Dendritic cell treated with granulocyte-macrophage colony-stimulating factor and Interleukin-4, amounts not matched to agents 40 ng/mL and 50 ng/mL, for 4 days (primary cell): ENCODE measurements at regions of chr2 and their contacts with region 1.

Region 1: DNA sequence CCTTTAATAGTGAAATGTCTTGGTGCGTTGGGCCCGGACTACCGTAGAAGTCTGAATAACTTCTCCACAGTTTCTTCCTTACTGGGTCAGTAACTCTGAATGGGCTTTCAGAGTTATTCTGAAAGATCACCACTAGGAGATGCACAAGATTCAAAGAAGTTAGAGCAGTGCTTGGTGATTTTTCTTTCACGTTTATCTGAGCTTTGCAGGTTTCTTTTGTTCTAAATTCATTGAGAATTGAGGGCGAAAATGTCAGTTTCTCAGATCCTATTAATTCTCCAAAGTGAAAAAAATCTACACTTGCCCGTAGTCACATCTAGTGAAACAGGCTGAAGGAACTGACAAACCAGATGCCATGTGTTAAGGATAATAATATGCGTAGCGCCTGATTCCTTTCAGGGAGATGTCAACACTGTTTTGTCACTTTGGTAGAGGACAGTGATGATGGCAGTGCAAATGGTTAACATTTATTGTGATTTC is 70.1 kb downstream of the QPCT start:
- H3K4me3 Mint-ChIP-seq: no peak overlapping the region
- H3K27ac Mint-ChIP-seq: no peak overlapping the region
- H3K4me1 Mint-ChIP-seq: no peaks in the 10 kb centered on the region
- H3K27me3 Mint-ChIP-seq: peaks cover 7% of the 10 kb centered on the region

Region 2: DNA sequence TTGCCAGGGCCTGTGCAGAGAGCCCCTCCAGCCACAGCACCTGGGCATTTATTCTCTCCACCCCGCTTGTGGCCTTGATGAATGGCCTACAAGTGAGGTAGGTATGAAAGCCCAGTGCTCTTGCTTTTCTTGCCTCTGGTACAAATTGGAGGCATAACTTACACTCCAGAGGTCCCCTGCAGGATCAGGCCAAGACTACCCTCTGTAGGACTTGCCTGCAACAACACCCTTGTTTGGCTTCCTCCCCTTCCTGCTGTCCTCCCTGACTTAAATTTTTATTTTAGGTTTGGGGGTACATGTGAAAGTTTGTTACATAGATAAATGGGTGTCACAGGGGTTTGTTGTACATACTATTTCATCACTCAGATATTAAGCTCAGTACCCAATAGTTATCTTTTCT is 161.3 kb after region 1 on chr2:
- intact Hi-C with region 1: loop called (anchors 1 kb)
- H3K4me3 Mint-ChIP-seq: no peak overlapping the region
- H3K27ac Mint-ChIP-seq: no peak overlapping the region
- H3K4me1 Mint-ChIP-seq: peaks cover 26% of the 10 kb centered on the region
- H3K27me3 Mint-ChIP-seq: no peaks in the 10 kb centered on the region

Region 3: DNA sequence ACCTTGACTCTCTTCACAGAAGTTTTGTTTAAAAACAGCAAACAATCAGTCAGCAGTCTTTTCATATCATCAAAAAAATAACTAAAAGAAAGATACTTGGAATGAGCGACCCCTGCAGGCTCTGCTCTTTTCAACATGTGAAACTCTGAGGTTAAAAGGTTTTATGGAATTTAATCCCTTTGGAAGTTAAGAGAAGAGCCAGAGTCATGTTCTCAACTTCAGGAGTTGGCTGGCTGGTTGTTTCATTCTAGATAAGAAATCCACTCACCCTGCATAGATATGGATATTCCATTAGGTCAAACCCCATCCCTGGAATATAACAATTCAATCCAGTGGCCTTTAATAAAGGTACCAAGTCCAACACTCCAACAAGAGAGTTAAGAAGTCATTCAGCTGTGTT is 395.0 kb after region 1 on chr2:
- intact Hi-C with region 1: loop called (anchors 1 kb)
- H3K4me3 Mint-ChIP-seq: no peak overlapping the region
- H3K27ac Mint-ChIP-seq: no peak overlapping the region
- H3K4me1 Mint-ChIP-seq: peaks cover 20% of the 10 kb centered on the region
- H3K27me3 Mint-ChIP-seq: no peaks in the 10 kb centered on the region

Region 4: DNA sequence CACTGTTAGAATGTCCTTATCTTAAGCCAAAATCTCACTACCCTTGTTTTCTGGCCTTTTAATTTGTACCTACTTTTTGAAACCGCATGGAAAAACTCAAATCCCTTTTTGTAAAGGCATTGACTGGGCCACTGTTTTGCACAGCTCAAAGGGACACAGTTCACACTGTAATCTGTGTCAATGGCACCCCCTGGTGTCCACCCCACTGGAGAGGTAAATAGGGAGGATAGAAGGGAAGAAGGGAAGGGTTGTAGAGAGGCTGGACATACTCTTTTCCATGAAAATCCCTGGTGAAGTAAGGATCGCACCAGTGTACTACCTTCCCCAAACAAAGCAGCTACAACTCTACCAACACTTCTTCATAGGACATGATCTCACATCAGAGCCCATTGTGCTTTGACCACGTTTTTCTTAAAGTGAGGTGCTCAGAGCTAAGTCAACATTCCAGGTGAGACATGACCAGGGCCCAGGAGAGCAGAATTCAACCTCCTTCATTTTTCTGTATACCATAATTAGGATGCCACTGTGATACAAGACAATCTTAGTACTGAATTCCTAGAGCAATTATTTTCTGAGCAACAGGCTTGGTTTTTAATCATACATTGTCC is 418.2 kb after region 1 on chr2:
- intact Hi-C with region 1: loop called (anchors 1 kb)
- H3K4me3 Mint-ChIP-seq: no peak overlapping the region
- H3K27ac Mint-ChIP-seq: no peak overlapping the region
- H3K4me1 Mint-ChIP-seq: peaks cover 66% of the 10 kb centered on the region
- H3K27me3 Mint-ChIP-seq: no peaks in the 10 kb centered on the region